Activated T-helper 2 cell treated with anti-CD3 and anti-CD28 coated beads, Interferon-gamma antibody, Interleukin-2, Interleukin-4, amounts not matched to agents 10 μg/mL and 5 μg/mL and 100 μg/mL, durations not matched to agents 14 hours and 24 hours and 36 hours (primary cell): ENCODE measurements at regions of chr6 and their contacts with region 1.

Region 1: DNA sequence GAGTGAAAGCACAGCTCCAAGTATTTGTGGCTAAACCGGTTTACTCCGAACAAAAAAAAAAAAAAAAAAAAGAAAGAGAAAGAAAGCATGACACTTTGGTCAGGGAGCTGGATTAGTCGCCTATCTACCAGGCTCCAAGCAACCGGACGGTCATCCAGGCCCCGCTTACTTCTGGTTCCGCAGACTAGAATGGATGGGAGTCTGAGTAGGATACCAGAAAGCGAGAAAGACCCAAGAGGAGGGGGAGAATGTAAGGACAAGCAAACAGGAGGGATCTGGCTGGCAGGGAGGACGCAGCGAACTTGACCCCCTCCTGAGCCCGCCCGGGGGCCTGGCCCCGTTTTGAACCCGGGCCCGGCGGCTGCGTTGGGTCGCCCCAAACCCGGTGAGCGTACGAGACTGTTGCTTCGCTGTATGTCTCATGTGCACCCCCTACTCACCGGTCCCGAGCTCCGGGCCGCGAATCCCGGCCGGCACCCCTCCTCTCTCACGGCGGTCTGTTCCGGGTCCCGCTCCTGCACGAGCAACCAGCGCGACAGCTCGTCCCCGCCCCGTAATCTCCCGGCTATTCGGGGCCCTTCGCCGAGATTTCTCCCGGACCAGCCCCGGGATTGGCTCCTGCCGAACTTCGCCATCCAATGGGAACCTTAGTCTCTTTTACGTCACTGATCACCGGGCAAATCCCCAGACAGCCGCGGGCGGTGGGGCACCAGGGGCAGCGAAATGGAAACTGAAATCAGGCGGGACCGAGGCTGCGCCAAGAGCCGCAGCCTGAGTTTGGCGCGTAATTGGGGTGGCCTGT is at the start of gene TRIM26:
- DNase-seq: peak; percentile 98
- H3K4me3 Mint-ChIP-seq: peak within 1 kb of the TSS; percentile 96
- H3K27ac Mint-ChIP-seq: peak within 1 kb of the TSS; percentile 97
- H3K4me1 Mint-ChIP-seq: peaks cover 48% of the 10 kb centered on the region
- H3K27me3 Mint-ChIP-seq: no peaks in the 10 kb centered on the region
- total RNA-seq, gene TRIM26: 49.9 and 51.5 TPM in 2 replicates

Region 2: GRCh38 chr6:29490552-29490951 is 722.5 kb before region 1 on chr6:
- intact Hi-C with region 1: no loop called
- DNase-seq: no peak
- H3K4me3 Mint-ChIP-seq: no peak overlapping the region
- H3K27ac Mint-ChIP-seq: no peak overlapping the region
- H3K4me1 Mint-ChIP-seq: no peaks in the 10 kb centered on the region
- H3K27me3 Mint-ChIP-seq: peaks cover 9% of the 10 kb centered on the region

Region 3: DNA sequence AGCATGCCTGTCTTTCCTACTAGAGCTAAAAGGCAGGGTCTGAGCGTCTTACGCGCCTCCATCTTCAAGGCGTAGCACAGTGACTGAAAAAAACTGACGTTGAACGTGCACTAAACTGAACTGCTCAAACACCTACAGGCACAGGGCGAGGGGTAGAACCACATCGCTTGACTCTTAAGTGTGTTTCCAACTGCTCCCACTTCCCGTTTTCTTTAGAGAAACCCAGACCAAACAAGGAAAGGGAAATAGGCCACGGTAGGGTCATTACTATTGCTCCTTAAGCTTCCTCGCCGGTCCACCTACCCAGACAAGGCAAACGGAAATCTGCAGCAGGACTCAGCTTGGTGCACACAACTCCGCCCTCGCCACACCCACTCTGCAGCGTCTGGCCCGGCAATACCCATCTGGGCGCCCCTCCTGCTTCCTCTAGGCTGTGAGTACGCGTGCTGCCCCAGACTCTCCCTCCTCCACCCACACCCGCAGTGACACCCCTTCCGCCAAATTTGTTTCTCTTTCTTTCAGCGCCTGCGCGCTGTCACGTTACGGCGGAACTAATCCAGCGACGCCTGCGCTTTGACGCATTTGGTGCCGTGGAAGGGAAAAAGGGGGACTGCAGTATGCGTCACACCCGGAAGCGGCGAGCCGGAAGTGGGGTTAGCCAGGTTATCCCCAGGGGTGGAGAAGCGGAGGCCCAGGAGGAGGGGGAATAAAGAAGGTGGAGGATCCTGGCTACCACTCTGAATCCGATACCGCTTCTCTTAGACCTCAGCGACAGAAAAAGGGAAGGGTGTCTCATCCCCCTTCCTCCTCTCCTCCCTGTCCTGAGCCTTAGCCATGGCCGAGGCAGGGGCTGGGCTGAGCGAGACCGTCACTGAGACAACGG is 146.2 kb before region 1 on chr6 and contains the start of gene PPP1R11:
- intact Hi-C with region 1: loop called (anchors 2 kb)
- DNase-seq: peak; percentile 99
- H3K4me3 Mint-ChIP-seq: peak within 1 kb of the TSS; percentile 93
- H3K27ac Mint-ChIP-seq: peak within 1 kb of the TSS; percentile 96
- H3K4me1 Mint-ChIP-seq: peaks cover 42% of the 10 kb centered on the region
- H3K27me3 Mint-ChIP-seq: peaks cover 10% of the 10 kb centered on the region
- total RNA-seq, gene PPP1R11: 55.9 and 56.1 TPM in 2 replicates

Region 4: GRCh38 chr6:30091577-30092381 is 121.3 kb before region 1 on chr6:
- intact Hi-C with region 1: no loop called
- DNase-seq: no peak
- H3K4me3 Mint-ChIP-seq: no peak overlapping the region
- H3K27ac Mint-ChIP-seq: no peak overlapping the region
- H3K4me1 Mint-ChIP-seq: no peaks in the 10 kb centered on the region
- H3K27me3 Mint-ChIP-seq: peaks cover 60% of the 10 kb centered on the region

Region 5: GRCh38 chr6:30169658-30170614 is 43.1 kb before region 1 on chr6:
- intact Hi-C with region 1: loop called (anchors 1 kb)
- DNase-seq: peak; percentile 8
- H3K4me3 Mint-ChIP-seq: no peak overlapping the region
- H3K27ac Mint-ChIP-seq: no peak overlapping the region
- H3K4me1 Mint-ChIP-seq: peaks cover 23% of the 10 kb centered on the region
- H3K27me3 Mint-ChIP-seq: peaks cover 38% of the 10 kb centered on the region

Region 6: GRCh38 chr6:30344868-30345671 is 132.0 kb after region 1 on chr6 and contains the start of gene RPP21:
- intact Hi-C with region 1: loop called (anchors 1 kb)
- DNase-seq: peak; percentile 84
- H3K4me3 Mint-ChIP-seq: peak within 1 kb of the TSS; percentile 88
- H3K27ac Mint-ChIP-seq: peak within 1 kb of the TSS; percentile 77
- H3K4me1 Mint-ChIP-seq: peaks cover 34% of the 10 kb centered on the region
- H3K27me3 Mint-ChIP-seq: peaks cover 16% of the 10 kb centered on the region
- total RNA-seq, gene RPP21: 40.6 and 41.9 TPM in 2 replicates